ENCODE measurements at regions of chr5 and their contacts with region 1.

Region 1: DNA sequence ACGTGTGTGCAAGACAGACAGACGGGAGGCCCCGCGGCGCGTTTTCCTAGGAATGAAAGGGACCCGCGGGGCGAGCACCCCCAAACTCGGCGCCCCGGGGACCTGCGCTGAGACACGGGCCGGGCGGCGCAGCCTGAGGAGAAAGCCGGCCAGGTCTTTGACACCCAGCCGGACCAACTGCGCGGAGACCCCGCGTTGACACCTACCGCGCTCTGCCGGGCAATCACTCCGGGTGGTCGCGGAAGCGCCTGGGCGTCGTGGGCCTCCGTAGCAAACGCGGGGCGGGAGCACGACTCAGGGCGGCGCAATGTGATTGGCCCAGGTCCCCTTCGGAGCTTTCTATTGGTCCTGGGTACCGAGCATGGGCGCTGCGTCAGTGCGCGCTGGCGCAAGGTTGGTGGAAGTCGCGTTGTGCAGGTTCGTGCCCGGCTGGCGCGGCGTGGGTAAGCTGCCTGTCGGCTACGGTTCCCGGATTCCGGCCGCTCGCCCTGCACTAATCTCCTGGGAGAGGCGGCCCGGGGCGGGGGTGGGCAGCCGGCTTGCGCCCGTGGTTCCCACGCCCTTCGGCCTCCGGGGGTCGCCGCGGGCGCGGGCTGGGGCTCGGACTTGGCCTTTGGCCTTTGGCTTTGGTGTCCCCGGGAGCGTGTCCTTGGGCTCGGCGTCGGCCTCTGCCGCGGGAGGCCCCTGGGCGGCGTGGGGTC is at the starts of genes FASTKD3 and MTRR:
- DNase-seq: peak; percentile 89
- ATAC-seq: peak; percentile 100
- H3K4me3 Mint-ChIP-seq: peak within 1 kb of the TSS; percentile 92
- H3K27ac Mint-ChIP-seq: peak within 1 kb of the TSS; percentile 82
- H3K4me1 Mint-ChIP-seq: peaks cover 57% of the 10 kb centered on the region
- H3K27me3 Mint-ChIP-seq: no peaks in the 10 kb centered on the region
- total RNA-seq, gene FASTKD3: 11.9 to 14.8 TPM
- total RNA-seq, gene MTRR: 56.3 to 57.0 TPM

Region 2: DNA sequence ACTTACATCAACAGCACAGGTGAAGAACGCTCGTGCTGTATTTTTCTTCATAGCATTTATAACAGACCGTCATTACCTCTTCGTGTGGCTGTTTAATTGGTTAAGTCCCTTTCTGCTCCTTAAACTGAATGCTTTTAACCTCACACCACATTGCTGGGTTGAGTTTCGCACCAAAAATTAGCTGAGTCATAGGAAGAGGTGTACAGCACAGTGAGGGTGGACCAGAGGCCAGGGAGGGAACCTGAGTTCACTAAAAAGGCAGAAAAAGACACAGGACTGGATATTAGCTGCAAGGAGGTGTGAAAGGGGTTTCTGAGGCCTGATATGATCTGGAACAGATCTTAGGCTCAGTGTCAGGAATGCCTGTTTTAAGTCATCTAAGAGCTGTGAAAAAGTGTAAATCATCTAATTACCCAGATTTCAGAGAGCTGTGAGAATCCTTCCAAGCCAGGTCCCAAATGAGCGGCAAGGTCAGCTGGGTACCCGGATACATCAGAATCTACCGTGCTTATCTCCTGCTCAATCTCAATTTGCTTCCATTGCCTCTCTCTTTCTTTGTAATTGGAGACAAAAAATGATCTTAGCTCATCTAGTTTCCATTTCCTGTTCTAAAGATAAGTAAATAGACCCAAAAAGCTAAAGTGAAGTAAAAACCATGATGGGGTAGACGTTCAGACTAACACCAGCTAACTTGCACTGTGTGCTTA is 10.8 kb before region 1 on chr5:
- POLR2A ChIA-PET with region 1: interaction called, 11 read pairs
- DNase-seq: no peak
- ATAC-seq: peak; percentile 50
- H3K4me3 Mint-ChIP-seq: peak overlapping the region; percentile 9
- H3K27ac Mint-ChIP-seq: peak overlapping the region; percentile 66
- H3K4me1 Mint-ChIP-seq: peaks cover 13% of the 10 kb centered on the region
- H3K27me3 Mint-ChIP-seq: peaks cover 5% of the 10 kb centered on the region